Upper lobe of right lung (tissue), 1 donor: ENCODE measurements at regions of chr11 and their contacts with region 1.

Region 1: GRCh38 chr11:57567515-57568329 is at the start of gene UBE2L6:
- DNase-seq: peak; percentile 92
- ATAC-seq: peak; percentile 92
- H3K4me3 ChIP-seq: peak within 1 kb of the TSS; percentile 96
- H3K27ac ChIP-seq: peak within 1 kb of the TSS; percentile 89
- H3K4me1 ChIP-seq: peaks cover 12% of the 10 kb centered on the region
- H3K27me3 ChIP-seq: no peaks in the 10 kb centered on the region
- CTCF ChIP-seq: no peak
- total RNA-seq, gene UBE2L6: 120 TPM

Region 2: GRCh38 chr11:57399221-57399620 is 168.5 kb before region 1 on chr11:
- intact Hi-C with region 1: no loop called
- DNase-seq: no peak
- ATAC-seq: no peak
- H3K4me3 ChIP-seq: no peak overlapping the region
- H3K27ac ChIP-seq: no peak overlapping the region
- H3K4me1 ChIP-seq: no peaks in the 10 kb centered on the region
- H3K27me3 ChIP-seq: no peaks in the 10 kb centered on the region
- CTCF ChIP-seq: no peak

Region 3: GRCh38 chr11:57644748-57645688 is 77.3 kb after region 1 on chr11:
- intact Hi-C with region 1: loop called (anchors 5 kb)
- DNase-seq: peak; percentile 87
- ATAC-seq: peak; percentile 80
- H3K4me3 ChIP-seq: no peak overlapping the region
- H3K27ac ChIP-seq: peak overlapping the region; percentile 58
- H3K4me1 ChIP-seq: peaks cover 49% of the 10 kb centered on the region
- H3K27me3 ChIP-seq: peaks cover 18% of the 10 kb centered on the region
- CTCF ChIP-seq: peak; percentile 80